Activated B cell treated with CpG ODN at 0.5 μM for 24 hours (primary cell): ENCODE measurements at regions of chr10 and their contacts with region 1.

Region 1: DNA sequence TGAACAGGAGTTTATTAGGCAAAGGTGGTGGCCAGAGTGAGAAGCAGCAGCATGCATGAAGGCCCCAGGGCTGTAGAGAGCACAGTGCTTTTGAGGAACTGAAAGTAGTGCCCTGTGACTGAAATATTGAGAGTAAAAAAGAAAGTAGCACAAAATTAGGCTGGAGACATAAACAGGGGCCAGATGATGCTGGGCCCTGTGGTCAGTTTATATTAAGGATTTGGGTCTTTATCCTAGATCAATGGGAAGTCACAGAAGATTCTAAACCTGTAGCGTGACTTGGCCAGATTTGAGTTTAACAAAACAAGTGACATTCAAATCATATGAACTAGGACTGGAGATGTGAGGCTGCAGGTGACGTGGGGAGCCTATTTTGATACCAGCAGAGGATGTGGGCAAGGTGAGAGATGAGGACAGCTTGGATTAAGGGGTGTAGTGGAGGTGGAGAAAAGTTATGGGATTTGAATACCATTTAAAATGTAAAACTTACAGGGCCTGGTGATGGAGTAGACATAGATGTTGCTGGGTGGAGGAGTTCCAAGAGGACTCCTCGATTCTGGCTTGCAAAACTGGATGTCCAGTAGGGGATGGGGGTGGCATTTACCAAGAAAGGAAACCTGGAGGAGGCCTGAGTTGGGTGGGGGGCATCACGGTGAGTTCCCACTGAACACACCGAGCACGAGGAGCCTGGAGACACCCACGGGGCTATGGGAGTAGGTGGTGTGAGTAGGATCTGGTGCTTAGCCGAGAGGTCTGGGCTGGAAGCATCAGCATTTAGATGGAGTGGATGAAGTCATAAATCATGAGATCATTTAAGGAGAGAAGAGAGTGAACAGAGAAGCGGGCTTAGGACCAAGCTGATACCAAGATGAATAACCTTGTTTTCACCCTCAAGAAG is 52.8 kb downstream of the HHEX start:
- DNase-seq: peak; percentile 30
- ATAC-seq: peak; percentile 95
- H3K4me3 Mint-ChIP-seq: peak overlapping the region; percentile 78
- H3K27ac Mint-ChIP-seq: peak overlapping the region; percentile 95
- H3K4me1 Mint-ChIP-seq: peaks cover 79% of the 10 kb centered on the region
- H3K27me3 Mint-ChIP-seq: no peaks in the 10 kb centered on the region
- CTCF ChIP-seq: no peak

Region 2: DNA sequence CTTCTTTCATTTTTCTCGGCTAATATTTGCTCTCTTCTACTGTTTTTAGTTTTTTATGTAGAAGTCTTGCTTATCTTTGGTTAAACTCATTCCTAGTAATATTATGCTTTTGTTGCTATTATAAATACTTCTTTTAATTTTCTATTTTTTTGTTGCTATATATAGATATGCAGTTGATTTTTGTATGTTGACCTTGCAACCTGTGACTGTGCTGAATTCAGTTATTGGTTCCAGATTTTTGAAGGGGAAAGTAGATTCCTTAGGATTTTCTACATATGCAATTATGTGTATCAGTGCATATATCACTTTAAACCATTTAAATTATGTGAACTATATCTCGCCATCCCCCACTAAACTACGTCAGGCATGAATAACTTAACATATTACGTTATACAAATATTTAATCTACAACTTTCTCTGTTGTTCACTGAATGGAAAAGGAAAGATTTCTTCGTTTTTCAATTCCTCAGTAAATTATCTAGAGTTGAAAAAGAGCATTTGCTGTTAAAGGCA is 240.2 kb before region 1 on chr10:
- CTCF ChIA-PET with region 1: no interaction called
- POLR2A ChIA-PET with region 1: no interaction called
- intact Hi-C with region 1: no loop called
- DNase-seq: no peak
- ATAC-seq: no peak
- H3K4me3 Mint-ChIP-seq: no peak overlapping the region
- H3K27ac Mint-ChIP-seq: no peak overlapping the region
- H3K4me1 Mint-ChIP-seq: no peaks in the 10 kb centered on the region
- H3K27me3 Mint-ChIP-seq: no peaks in the 10 kb centered on the region
- CTCF ChIP-seq: no peak

Region 3: DNA sequence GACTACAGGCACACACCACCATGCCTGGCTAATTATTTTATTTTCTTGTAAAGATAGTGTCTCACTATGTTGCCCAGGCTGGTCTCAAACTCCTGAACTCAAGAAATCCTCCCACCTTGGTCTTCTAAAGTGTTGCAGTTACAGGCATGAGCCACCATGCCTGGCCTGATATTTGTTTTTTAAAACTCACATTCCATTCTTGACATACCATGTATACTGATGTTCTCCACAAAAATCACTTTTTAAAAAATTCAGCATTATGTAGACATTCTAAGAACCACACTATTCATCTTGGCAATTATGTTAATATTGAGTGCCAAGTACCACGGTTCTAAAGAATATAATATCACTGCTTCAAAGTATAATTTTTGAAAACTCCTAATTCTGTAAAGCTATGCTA is 212.2 kb before region 1 on chr10:
- CTCF ChIA-PET with region 1: no interaction called
- POLR2A ChIA-PET with region 1: no interaction called
- intact Hi-C with region 1: no loop called
- DNase-seq: no peak
- ATAC-seq: no peak
- H3K4me3 Mint-ChIP-seq: no peak overlapping the region
- H3K27ac Mint-ChIP-seq: no peak overlapping the region
- H3K4me1 Mint-ChIP-seq: no peaks in the 10 kb centered on the region
- H3K27me3 Mint-ChIP-seq: no peaks in the 10 kb centered on the region
- CTCF ChIP-seq: no peak

Region 4: GRCh38 chr10:92699518-92700381 is 42.8 kb before region 1 on chr10:
- CTCF ChIA-PET with region 1: interaction called, 3 read pairs
- POLR2A ChIA-PET with region 1: interaction called, 105 read pairs
- intact Hi-C with region 1: loop called (anchors 1 kb)
- DNase-seq: peak; percentile 46
- ATAC-seq: peak; percentile 64
- H3K4me3 Mint-ChIP-seq: peak overlapping the region; percentile 88
- H3K27ac Mint-ChIP-seq: peak overlapping the region; percentile 85
- H3K4me1 Mint-ChIP-seq: peaks cover 72% of the 10 kb centered on the region
- H3K27me3 Mint-ChIP-seq: no peaks in the 10 kb centered on the region
- CTCF ChIP-seq: no peak

Region 5: GRCh38 chr10:92712016-92712889 is 30.3 kb before region 1 on chr10:
- CTCF ChIA-PET with region 1: interaction called, 5 read pairs
- POLR2A ChIA-PET with region 1: interaction called, 21 read pairs
- intact Hi-C with region 1: loop called (anchors 1 kb)
- DNase-seq: no peak
- ATAC-seq: peak; percentile 74
- H3K4me3 Mint-ChIP-seq: peak overlapping the region; percentile 60
- H3K27ac Mint-ChIP-seq: peak overlapping the region; percentile 85
- H3K4me1 Mint-ChIP-seq: peaks cover 65% of the 10 kb centered on the region
- H3K27me3 Mint-ChIP-seq: no peaks in the 10 kb centered on the region
- CTCF ChIP-seq: no peak

Region 6: DNA sequence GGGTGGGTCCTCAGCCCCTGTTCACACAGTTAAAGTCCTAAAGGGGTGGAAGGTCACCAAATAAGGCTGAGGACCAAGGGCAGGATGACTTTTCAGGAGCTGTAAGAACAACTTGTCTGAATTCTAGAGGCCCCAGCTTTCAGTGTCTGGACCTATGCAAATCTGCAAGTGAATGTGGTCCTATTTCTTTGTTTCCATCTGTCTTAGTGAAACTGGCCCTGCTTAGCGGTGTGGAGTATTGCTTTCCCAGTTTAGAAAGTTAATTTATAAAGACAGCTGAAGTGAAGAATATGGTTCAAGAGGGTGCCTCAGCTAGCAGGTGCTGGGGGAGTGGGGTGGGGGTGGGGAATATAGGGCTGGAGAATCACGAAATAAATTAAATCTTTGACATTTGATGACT is 12.7 kb before region 1 on chr10:
- CTCF ChIA-PET with region 1: no interaction called
- POLR2A ChIA-PET with region 1: interaction called, 6 read pairs
- intact Hi-C with region 1: loop called (anchors 1 kb)
- DNase-seq: no peak
- ATAC-seq: peak; percentile 72
- H3K4me3 Mint-ChIP-seq: no peak overlapping the region
- H3K27ac Mint-ChIP-seq: no peak overlapping the region
- H3K4me1 Mint-ChIP-seq: peaks cover 50% of the 10 kb centered on the region
- H3K27me3 Mint-ChIP-seq: no peaks in the 10 kb centered on the region
- CTCF ChIP-seq: no peak

Region 7: DNA sequence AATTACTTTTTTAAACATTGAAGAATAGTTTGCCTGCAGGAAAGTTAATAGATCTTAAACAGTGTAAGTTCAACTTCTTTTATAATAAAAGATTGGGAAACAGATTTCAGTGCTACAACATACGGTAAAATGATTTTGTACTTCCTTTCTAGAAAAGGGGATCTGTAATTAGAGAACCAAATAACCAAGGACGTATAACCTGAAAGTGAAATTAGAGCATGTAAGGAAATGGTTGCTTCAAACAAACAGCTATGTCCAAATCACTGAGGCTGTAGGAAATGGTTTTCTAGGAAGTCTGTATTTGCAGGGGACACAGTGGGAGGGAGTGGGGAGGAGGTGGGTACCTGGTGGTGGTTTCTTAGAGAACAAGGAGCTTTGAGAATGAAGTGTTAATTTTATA is 47.9 kb after region 1 on chr10:
- CTCF ChIA-PET with region 1: interaction called, 4 read pairs
- POLR2A ChIA-PET with region 1: interaction called, 14 read pairs
- intact Hi-C with region 1: no loop called
- DNase-seq: no peak
- ATAC-seq: peak; percentile 47
- H3K4me3 Mint-ChIP-seq: peak overlapping the region; percentile 63
- H3K27ac Mint-ChIP-seq: peak overlapping the region; percentile 92
- H3K4me1 Mint-ChIP-seq: peaks cover 45% of the 10 kb centered on the region
- H3K27me3 Mint-ChIP-seq: no peaks in the 10 kb centered on the region
- CTCF ChIP-seq: no peak